ENCODE measurements at regions of chr12 and their contacts with region 1.

Region 1: DNA sequence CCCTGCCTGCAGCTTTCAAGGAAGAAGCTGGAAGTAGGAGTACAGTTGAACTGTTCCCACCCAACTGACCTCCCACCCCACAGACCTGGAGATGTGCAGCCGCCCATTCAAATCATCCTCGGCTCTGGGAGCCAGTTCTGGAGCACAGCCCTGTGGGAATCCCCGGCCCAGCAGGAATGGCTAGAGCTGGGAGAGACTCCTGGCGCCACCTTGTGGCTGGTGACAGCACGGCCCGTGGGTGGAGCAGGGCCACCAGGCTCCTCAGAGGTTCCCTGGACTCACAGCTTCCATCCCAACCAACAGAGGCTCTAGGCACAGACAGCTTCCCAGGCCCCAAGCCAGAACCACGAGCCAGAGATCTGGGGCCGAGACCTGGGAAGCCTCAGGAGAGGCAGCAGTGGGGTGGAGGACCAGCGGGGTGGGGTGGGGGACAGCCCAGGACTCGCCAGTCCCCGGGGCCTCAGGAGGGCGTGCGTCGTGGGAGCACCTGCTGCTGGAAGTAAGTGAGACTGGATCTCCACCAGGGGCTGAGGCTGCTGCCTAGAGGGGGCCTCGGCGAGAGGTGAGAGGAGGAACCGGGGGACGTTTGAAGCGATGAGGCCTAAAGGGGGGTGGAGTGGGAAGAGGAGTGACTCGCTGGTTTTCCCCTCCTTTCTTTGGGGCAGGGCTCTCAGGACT is 43.4 kb downstream of the RNF34 start:
- DNase-seq: peak; percentile 90
- ATAC-seq: peak; percentile 93

Region 2: DNA sequence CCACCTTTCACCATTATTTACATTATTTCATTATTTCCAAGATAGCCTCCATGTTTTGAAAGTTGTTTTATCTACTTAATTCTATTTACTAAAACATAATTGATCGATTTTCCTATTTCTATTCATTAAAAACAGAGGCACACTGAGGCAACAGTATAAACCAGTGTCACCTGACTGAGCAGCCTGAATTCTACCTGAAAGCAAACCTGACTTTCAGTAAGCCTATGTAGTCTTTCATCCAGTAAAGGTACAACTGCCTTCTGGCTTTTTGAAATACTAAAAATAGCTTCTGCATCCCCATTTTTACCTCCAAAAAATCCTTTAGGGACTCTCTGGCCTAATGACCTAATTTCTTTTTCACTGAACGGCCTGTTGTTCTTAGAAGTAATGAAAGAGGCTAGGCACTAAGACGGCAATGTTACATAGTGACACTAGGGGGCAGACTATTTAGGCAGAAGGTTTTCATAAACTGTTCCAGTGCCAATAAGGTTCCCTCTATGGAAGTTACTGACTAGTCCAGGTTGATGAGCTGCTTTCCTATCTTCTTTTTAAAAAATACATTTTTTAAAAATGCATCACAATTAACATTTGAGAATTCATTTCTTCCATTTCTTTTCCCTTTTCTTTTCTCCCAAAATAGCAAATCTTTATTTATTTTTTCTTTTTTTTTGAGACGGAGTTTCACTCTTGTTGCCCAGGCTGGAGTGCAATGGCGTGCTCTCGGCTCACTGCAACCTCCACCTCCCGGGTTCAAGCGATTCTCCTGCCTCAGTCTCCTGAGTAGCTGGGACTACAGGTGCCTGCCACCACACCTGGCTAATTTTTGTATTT is 108.6 kb before region 1 on chr12:
- intact Hi-C with region 1: loop called (anchors 5 kb)
- DNase-seq: no peak
- ATAC-seq: peak; percentile 82

Region 3: GRCh38 chr12:121364683-121365121 is 78.6 kb before region 1 on chr12:
- intact Hi-C with region 1: no loop called
- DNase-seq: no peak
- ATAC-seq: no peak

Measured in Right ventricle myocardium superior (tissue), 1 donor.